Activated CD4-positive, alpha-beta T cell treated with anti-CD3 and anti-CD28 coated beads for 36 hours (primary cell): ENCODE measurements at regions of chr17 and their contacts with region 1.

Region 1: GRCh38 chr17:8222630-8223356 is 12.4 kb upstream of the AURKB start:
- DNase-seq: peak; percentile 94
- ATAC-seq: peak; percentile 35
- H3K4me3 Mint-ChIP-seq: peak overlapping the region; percentile 98
- H3K27ac Mint-ChIP-seq: peak overlapping the region; percentile 98
- H3K4me1 Mint-ChIP-seq: peaks cover 54% of the 10 kb centered on the region
- H3K27me3 Mint-ChIP-seq: no peaks in the 10 kb centered on the region

Region 2: DNA sequence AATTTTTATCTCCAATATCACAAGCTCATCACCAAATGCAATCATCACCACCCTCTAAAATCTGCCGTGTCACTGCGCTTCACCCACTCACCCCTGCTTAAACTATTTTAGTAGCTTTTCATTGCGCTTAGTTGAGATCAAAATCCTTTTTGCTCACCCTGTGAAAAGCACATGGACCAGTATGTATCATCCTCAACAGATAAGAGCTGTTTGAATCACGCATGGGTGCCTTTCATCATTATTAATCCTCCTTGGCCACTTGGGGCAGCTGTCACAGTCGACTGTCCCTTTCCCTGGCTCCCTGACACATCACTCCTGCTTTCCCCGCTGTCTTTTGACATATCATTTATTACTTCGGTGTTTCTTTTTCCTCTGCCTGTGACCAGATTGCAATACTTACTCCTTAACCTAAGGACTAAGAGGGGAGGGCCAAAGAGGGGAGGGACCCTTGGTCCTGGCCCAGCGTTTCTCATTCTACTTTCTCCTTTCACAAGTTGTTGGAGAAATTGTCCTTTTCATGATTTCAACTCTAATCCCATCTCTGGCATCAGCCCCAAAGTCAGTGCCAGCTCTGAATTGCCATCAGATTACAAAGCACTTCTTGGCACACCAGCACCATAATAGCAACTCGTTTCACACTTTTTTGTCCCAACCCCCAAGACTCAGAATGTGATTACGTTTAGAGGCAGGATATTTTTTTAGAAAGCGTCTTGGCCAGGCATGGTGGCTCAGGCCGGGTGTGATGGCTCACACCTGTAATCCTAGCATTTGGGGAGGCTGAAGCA is 397.4 kb before region 1 on chr17:
- CTCF ChIA-PET with region 1: no interaction called
- POLR2A ChIA-PET with region 1: no interaction called
- intact Hi-C with region 1: no loop called
- DNase-seq: no peak
- ATAC-seq: peak; percentile 72
- H3K4me3 Mint-ChIP-seq: no peak overlapping the region
- H3K27ac Mint-ChIP-seq: no peak overlapping the region
- H3K4me1 Mint-ChIP-seq: peaks cover 3% of the 10 kb centered on the region
- H3K27me3 Mint-ChIP-seq: no peaks in the 10 kb centered on the region

Region 3: DNA sequence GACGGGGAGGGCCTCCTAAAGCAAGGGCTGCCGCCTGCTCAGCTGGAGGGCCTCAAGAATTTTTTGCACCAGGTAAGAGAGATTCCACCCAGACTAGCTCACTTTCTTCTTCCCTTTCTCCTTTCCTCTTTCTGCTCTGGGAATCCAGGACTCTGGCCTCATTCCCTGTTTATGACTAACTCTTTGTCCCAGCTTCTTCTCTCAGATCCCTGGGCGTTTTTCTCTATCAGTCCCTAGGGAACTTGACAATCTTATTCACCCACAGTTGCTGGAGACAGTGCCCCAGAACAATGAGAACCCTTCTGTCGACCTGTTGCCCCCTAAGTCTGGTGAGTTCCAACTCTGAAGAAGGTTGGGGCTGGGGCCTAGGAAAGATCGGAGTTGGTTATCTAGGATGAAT is 275.1 kb before region 1 on chr17:
- CTCF ChIA-PET with region 1: no interaction called
- POLR2A ChIA-PET with region 1: no interaction called
- intact Hi-C with region 1: no loop called
- DNase-seq: no peak
- ATAC-seq: no peak
- H3K4me3 Mint-ChIP-seq: no peak overlapping the region
- H3K27ac Mint-ChIP-seq: no peak overlapping the region
- H3K4me1 Mint-ChIP-seq: peaks cover 17% of the 10 kb centered on the region
- H3K27me3 Mint-ChIP-seq: no peaks in the 10 kb centered on the region

Region 4: DNA sequence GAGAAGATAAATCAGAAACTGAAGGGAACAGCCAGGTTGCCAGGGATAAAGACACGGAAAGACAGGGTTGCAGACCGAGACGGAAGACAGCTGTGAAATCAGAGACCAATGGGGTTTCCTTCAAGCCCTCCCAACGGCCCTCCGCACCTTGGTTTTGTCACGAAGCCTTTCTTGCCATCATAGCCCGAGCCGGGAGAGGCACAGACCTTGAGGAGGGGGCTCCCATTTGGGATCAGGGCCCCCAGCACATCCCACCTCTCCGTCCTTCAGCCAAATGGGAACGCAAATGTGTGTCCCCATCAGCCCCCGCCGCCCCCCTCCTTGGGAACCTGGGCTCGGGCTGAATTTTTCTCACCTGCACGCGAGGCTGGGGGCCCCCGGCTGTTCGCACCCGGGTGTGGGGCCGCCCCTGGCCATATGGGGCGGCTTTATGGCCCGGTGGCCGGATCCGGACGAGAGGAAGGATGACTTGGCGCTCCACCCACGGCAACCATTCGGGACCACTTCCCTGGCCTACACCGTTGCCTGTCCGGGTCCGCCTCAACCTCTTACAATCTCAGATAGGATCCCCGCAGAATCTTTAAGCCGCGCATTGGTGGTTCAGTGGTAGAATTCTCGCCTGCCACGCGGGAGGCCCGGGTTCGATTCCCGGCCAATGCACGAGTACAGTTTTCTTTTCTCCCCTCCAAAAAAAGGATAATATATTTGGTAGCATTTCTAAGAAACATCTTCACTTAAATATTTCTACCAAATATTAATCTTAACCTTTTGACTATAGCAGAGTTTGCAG is 97.4 kb before region 1 on chr17:
- CTCF ChIA-PET with region 1: interaction called, 48 read pairs
- POLR2A ChIA-PET with region 1: interaction called, 5 read pairs
- intact Hi-C with region 1: loop called (anchors 1 kb)
- DNase-seq: peak; percentile 92
- ATAC-seq: peak; percentile 16
- H3K4me3 Mint-ChIP-seq: peak overlapping the region; percentile 90
- H3K27ac Mint-ChIP-seq: peak overlapping the region; percentile 79
- H3K4me1 Mint-ChIP-seq: peaks cover 51% of the 10 kb centered on the region
- H3K27me3 Mint-ChIP-seq: peaks cover 19% of the 10 kb centered on the region

Region 5: GRCh38 chr17:8156246-8156992 is 66.4 kb before region 1 on chr17:
- CTCF ChIA-PET with region 1: interaction called, 7 read pairs
- POLR2A ChIA-PET with region 1: interaction called, 10 read pairs
- intact Hi-C with region 1: loop called (anchors 1 kb)
- DNase-seq: peak; percentile 100
- ATAC-seq: peak; percentile 75
- H3K4me3 Mint-ChIP-seq: no peak overlapping the region
- H3K27ac Mint-ChIP-seq: no peak overlapping the region
- H3K4me1 Mint-ChIP-seq: peaks cover 49% of the 10 kb centered on the region
- H3K27me3 Mint-ChIP-seq: no peaks in the 10 kb centered on the region

Region 6: DNA sequence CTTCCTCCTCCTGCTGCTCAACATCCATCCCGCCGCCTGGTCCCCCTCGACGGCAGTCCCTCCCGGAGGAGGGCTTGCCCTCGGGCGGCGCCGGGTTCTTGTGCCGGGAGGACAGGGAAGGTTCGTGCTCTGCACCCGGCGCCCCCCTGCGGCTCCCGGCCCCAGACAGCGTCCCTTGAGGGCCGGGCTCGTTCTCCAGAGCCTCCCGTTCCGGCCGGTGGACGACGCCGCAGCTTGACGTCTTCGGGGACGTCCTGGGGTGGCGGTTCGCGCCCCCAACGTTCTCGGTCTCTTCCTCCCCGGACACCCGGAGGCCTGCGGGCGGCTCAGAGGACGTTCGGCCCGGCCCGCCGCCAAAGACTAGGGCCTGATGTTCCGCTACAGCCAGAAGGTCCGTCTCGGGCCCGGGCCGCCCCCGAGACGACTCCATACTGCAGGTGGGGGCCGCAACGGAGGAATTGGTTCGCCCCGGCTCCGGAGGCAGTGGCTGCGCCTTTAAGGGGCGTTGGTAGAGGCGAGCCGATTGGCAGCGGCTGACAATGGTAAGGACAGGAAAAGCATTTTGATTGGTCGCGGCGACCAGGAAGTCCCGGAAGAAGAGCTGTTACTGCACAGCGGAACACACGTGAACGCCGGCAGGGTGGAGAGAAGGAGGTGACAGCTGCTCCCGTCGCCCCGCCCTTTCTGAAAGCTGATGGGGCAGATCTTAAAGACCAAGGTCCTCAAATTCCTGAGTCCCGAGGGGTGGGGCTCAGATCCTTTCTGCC is 32.9 kb before region 1 on chr17 and contains the start of gene BORCS6:
- CTCF ChIA-PET with region 1: interaction called, 41 read pairs
- POLR2A ChIA-PET with region 1: interaction called, 17 read pairs
- intact Hi-C with region 1: loop called (anchors 1 kb)
- DNase-seq: peak; percentile 98
- ATAC-seq: peak; percentile 67
- H3K4me3 Mint-ChIP-seq: no peak within 1 kb of the TSS
- H3K27ac Mint-ChIP-seq: peak within 1 kb of the TSS; percentile 86
- H3K4me1 Mint-ChIP-seq: peaks cover 10% of the 10 kb centered on the region
- H3K27me3 Mint-ChIP-seq: no peaks in the 10 kb centered on the region
- total RNA-seq, gene BORCS6: 3.9 to 4.5 TPM

Region 7: GRCh38 chr17:8243827-8244226 is 21.0 kb after region 1 on chr17:
- CTCF ChIA-PET with region 1: interaction called, 11 read pairs
- POLR2A ChIA-PET with region 1: interaction called, 40 read pairs
- intact Hi-C with region 1: loop called (anchors 1 kb)
- DNase-seq: peak; percentile 57
- ATAC-seq: no peak
- H3K4me3 Mint-ChIP-seq: no peak overlapping the region
- H3K27ac Mint-ChIP-seq: peak overlapping the region; percentile 75
- H3K4me1 Mint-ChIP-seq: peaks cover 42% of the 10 kb centered on the region
- H3K27me3 Mint-ChIP-seq: no peaks in the 10 kb centered on the region

Region 8: DNA sequence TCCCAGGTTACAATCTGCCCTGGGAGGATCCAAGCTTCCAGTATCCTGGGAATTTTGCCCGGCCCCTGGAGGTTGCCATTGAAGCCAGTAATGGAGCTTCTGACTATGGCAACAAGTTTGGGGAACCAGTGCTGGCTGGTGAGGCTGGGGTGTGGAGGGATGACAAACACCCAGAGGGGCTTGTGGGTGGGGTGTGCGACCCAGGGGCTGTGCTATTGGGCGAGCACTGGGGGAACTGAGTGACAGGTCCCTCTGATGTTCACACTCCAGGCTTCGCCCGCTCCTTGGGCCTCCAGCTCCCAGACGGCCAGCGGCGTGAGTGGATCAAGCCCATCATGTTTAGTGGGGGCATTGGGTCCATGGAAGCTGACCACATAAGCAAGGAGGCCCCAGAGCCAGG is 35.0 kb after region 1 on chr17:
- CTCF ChIA-PET with region 1: no interaction called
- POLR2A ChIA-PET with region 1: no interaction called
- intact Hi-C with region 1: no loop called
- DNase-seq: no peak
- ATAC-seq: no peak
- H3K4me3 Mint-ChIP-seq: no peak overlapping the region
- H3K27ac Mint-ChIP-seq: no peak overlapping the region
- H3K4me1 Mint-ChIP-seq: no peaks in the 10 kb centered on the region
- H3K27me3 Mint-ChIP-seq: no peaks in the 10 kb centered on the region

Region 9: DNA sequence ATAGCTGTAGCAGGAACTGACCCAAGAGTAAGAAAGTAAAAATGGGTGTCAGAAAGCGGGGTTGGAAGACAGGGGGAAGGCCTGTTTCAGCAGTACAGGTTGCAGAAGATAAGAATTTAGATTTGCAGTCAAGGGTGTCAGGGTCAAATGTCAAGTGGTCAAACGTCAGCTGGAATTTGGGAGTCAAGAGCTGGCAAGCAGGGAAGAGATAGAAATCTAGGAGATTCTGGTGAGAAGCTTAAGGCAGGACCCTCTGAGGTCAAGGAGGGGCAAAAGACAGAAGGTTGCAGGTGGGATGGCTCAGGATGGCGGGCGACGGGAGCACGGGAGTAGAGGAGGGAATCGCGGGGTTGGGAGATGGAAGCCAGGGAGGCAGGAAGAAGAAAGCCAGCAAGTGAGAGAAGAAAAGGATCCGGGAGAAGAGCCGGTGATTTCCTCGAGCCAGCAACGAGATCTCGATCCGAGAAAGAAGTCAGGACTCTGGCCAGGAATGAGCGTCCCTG is 72.1 kb after region 1 on chr17:
- CTCF ChIA-PET with region 1: interaction called, 4 read pairs
- POLR2A ChIA-PET with region 1: interaction called, 4 read pairs
- intact Hi-C with region 1: loop called (anchors 1 kb)
- DNase-seq: no peak
- ATAC-seq: no peak
- H3K4me3 Mint-ChIP-seq: peak overlapping the region; percentile 76
- H3K27ac Mint-ChIP-seq: peak overlapping the region; percentile 90
- H3K4me1 Mint-ChIP-seq: peaks cover 17% of the 10 kb centered on the region
- H3K27me3 Mint-ChIP-seq: no peaks in the 10 kb centered on the region